Activated naive CD4-positive, alpha-beta T cell treated with anti-CD3 and anti-CD28 coated beads for 36 hours (primary cell): ENCODE measurements at regions of chr3 and their contacts with region 1.

Region 1: GRCh38 chr3:66276705-66277274 is 56.0 kb downstream of the SLC25A26 start:
- DNase-seq: peak; percentile 84
- H3K4me3 Mint-ChIP-seq: no peak overlapping the region
- H3K27ac Mint-ChIP-seq: no peak overlapping the region
- H3K4me1 Mint-ChIP-seq: peaks cover 24% of the 10 kb centered on the region
- H3K27me3 Mint-ChIP-seq: no peaks in the 10 kb centered on the region

Region 2: DNA sequence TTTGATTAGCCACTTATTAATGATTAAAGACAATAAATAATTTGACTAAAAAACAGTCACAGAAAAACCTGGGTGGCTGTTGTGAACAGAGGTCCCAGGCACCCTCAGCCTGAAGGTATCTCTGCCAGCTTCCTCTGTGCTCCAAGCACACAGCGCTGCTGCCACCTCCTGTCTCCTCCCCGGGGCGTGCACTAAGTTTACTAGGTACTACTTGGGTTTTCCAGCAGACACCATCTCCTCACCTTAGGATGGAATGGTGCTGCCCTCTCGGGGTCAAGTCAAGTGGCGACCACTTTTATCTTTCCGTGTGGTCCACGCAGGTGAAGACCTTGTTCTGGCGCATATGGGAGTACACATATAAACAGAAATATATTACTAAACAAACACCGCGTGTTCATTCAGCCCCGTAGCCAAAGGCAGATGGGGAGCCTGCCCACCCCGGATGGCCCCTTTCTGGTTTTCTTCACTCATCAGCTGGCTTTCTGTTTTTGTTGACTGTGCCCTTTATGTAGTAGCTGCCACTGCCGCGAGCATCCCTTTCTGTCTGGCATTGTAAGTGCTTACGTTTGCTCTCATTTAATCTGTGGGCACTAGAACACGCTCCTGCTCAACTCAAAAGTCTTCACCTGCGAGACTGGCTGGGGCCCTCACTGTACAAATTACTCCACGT is 96.0 kb after region 1 on chr3:
- CTCF ChIA-PET with region 1: interaction called, 4 read pairs
- intact Hi-C with region 1: loop called (anchors 1 kb)
- DNase-seq: peak; percentile 56
- H3K4me3 Mint-ChIP-seq: no peak overlapping the region
- H3K27ac Mint-ChIP-seq: peak overlapping the region; percentile 16
- H3K4me1 Mint-ChIP-seq: peaks cover 4% of the 10 kb centered on the region
- H3K27me3 Mint-ChIP-seq: no peaks in the 10 kb centered on the region

Region 3: GRCh38 chr3:66378256-66378823 is 101.5 kb after region 1 on chr3:
- CTCF ChIA-PET with region 1: interaction called, 4 read pairs
- intact Hi-C with region 1: loop called (anchors 1 kb)
- DNase-seq: peak; percentile 47
- H3K4me3 Mint-ChIP-seq: no peak overlapping the region
- H3K27ac Mint-ChIP-seq: peak overlapping the region; percentile 59
- H3K4me1 Mint-ChIP-seq: peaks cover 11% of the 10 kb centered on the region
- H3K27me3 Mint-ChIP-seq: no peaks in the 10 kb centered on the region

Region 4: DNA sequence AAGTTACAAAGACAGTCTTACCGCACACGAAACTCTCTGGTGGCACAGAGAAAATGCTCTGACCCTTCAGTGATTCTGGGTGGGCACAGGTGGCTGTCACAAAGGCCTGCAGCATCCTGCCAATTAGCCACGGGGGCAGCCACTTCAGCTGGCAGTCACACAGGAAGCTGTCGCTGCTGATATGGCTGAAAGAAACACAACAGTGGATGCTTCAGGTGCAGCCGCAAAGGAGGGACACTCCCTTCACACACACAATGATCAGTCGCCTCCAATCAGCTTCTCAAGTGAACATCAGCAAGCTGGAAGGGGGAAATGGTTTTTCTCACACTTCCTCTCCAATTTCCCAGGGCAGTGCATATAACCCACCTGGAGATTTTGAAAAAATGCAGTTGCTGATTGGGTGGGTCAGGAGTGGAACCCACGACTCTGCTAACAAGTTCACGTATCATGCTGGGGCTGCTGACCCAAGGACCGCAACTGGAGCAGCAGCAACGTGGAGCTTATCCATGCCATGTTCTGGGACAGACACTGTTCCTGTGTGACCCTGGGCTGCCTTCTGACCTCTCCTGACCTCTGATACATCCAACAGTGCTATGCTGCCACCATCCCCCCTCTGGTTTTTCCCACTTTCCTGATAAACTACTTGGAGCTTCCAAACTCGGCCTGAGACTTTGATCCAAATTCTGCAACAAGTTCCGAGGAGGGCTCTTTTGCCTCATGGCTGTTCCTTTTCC is 117.4 kb after region 1 on chr3:
- CTCF ChIA-PET with region 1: no interaction called
- intact Hi-C with region 1: loop called (anchors 1 kb)
- DNase-seq: peak; percentile 75
- H3K4me3 Mint-ChIP-seq: peak overlapping the region; percentile 73
- H3K27ac Mint-ChIP-seq: peak overlapping the region; percentile 82
- H3K4me1 Mint-ChIP-seq: peaks cover 48% of the 10 kb centered on the region
- H3K27me3 Mint-ChIP-seq: no peaks in the 10 kb centered on the region

Region 5: GRCh38 chr3:66822186-66823008 is 545.6 kb after region 1 on chr3:
- CTCF ChIA-PET with region 1: interaction called, 10 read pairs
- intact Hi-C with region 1: loop called (anchors 1 kb)
- DNase-seq: peak; percentile 81
- H3K4me3 Mint-ChIP-seq: no peak overlapping the region
- H3K27ac Mint-ChIP-seq: no peak overlapping the region
- H3K4me1 Mint-ChIP-seq: no peaks in the 10 kb centered on the region
- H3K27me3 Mint-ChIP-seq: no peaks in the 10 kb centered on the region